ENCODE measurements at regions of chr1 and their contacts with region 1.

Region 1: DNA sequence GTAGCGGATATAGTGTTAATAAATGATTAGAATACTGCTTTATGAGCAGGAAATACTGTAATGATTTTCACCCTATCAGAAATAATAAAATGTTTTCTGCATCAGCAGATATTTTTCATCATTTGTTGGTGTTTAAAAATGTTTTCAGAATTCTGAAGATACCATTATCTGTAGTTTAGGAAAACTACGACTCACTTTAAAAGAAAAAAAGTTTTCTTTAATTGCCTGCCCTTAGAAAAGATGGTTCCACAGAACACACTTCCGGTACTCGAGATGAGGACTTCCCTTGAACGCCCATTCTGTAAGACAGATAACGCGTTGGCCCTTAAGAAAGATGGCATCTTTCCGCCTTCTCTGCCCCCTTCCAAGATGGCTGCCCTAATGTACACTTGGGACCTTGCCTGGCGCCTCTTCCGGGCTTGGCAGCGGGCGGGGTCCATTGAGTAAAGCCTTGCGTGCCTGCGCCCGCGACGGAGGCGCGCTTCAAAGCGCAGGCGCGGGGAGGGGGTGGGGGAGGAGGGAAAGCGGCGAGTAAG is at the start of gene SZRD1:
- DNase-seq: peak; percentile 98
- ATAC-seq: peak; percentile 90
- total RNA-seq, gene SZRD1: 108 TPM

Region 2: DNA sequence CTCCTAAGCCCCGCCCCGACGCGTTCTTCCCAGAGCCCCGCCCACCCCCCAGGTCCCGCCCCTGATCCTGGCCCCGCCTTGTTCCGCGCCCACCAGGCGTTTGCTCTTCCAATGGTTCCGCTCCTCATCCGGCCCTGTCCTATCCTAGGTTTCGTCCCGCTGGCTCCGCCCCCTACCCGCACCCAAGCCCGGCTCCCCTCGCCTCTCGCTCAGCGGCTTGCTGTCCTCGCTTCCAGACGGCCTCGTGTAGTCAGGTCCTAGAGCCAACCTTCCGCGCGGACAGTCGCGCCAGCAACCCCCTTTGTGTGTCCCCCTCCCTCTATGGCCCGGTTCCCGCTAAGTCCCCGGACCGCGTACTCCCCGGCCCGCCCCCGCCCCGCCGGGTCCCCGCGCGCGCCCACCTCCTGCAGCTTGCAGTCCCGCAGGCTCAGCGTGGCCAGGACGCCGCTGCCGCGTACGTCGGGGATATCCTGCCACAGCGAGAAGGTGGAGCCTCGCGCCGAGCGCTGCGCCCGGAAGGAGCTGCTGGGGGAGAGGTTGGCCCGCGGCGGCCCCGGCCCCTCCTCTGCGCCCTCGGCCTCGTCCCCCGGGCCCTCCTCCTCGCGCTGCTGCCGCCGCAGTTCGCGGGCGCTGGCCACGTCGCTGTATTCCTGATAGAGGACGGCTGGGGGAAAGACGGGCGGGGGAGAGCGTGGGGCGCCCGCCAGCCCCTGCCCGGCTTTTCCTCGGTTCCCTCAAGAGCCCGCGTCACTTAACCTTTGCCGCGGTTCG is 160.1 kb before region 1 on chr1:
- intact Hi-C with region 1: loop called (anchors 5 kb)
- DNase-seq: peak; percentile 99
- ATAC-seq: peak; percentile 96

Region 3: GRCh38 chr1:16440470-16441281 is 73.9 kb after region 1 on chr1 and contains the start of gene NECAP2:
- intact Hi-C with region 1: loop called (anchors 1 kb)
- DNase-seq: peak; percentile 97
- ATAC-seq: peak; percentile 96
- total RNA-seq, gene NECAP2: 17.7 TPM

Measured in Right ventricle myocardium inferior (tissue), 1 donor.